CD8-positive, alpha-beta T cell (primary cell): ENCODE measurements at regions of chr15 and their contacts with region 1.

Region 1: GRCh38 chr15:51982013-51982769 is 10.6 kb upstream of the LEO1 start:
- DNase-seq: peak in 7 of 9 experiments; percentile 5 to 81 (median 32)
- ATAC-seq: peak; percentile 96
- H3K4me3 ChIP-seq: no peak overlapping the region
- H3K4me3 Mint-ChIP-seq: peak overlapping the region; percentile 68
- H3K27ac ChIP-seq: no peak overlapping the region
- H3K27ac Mint-ChIP-seq: peak overlapping the region; percentile 25
- H3K4me1 ChIP-seq: peaks cover 8% of the 10 kb centered on the region
- H3K4me1 Mint-ChIP-seq: peaks cover 10% of the 10 kb centered on the region
- H3K27me3 ChIP-seq: peaks cover 0 to 2% of the 10 kb centered on the region in 2 experiments
- H3K27me3 Mint-ChIP-seq: no peaks in the 10 kb centered on the region
- CTCF ChIP-seq: peak; percentile 88

Region 2: GRCh38 chr15:51516291-51516690 is 465.9 kb before region 1 on chr15:
- CTCF ChIA-PET with region 1: no interaction called
- POLR2A ChIA-PET with region 1: no interaction called
- intact Hi-C with region 1: no loop called
- DNase-seq: no peak
- ATAC-seq: no peak
- H3K4me3 ChIP-seq: no peak overlapping the region
- H3K4me3 Mint-ChIP-seq: no peak overlapping the region
- H3K27ac ChIP-seq: no peak overlapping the region
- H3K27ac Mint-ChIP-seq: no peak overlapping the region
- H3K4me1 ChIP-seq: no peaks in the 10 kb centered on the region
- H3K4me1 Mint-ChIP-seq: no peaks in the 10 kb centered on the region
- H3K27me3 ChIP-seq: no peaks in the 10 kb centered on the region
- H3K27me3 Mint-ChIP-seq: no peaks in the 10 kb centered on the region
- CTCF ChIP-seq: no peak

Region 3: DNA sequence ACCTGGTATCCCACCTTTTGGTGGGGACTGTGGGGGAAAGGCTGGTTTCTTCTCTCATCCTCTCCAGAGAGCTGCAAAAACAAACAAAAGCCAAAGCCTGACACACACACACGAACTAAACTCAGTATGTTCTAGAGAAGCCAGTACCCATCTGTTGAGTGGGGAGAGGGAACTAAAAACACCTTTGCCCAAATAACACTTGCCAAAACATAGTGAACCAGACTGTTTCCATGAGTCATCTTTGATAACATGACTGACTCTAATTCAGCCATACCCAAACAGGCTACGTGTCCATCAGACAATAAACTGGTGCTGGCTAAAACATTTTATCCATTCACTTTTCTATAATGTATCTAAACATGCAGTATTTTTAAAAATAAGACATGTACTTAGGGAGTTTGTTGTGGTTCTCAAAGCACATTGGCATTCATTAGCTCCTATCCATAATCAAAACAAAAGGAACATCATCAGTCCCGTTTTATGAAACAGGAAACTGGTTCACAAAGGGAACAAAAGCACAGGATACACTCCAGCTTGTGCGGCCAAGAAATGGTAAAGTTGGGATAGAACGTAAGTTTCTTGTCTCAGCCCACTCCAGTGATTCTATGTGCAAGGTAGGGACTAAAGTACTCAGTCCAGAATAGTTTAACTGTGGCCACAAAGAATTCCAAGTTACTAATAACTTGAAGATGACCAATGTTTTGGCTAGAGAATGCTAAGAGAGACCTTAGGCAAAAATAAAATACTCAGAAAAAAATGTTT is 260.8 kb before region 1 on chr15:
- CTCF ChIA-PET with region 1: no interaction called
- POLR2A ChIA-PET with region 1: no interaction called
- intact Hi-C with region 1: no loop called
- DNase-seq: no peak
- ATAC-seq: no peak
- H3K4me3 ChIP-seq: no peak overlapping the region
- H3K4me3 Mint-ChIP-seq: no peak overlapping the region
- H3K27ac ChIP-seq: no peak overlapping the region
- H3K27ac Mint-ChIP-seq: no peak overlapping the region
- H3K4me1 ChIP-seq: peaks cover 22% of the 10 kb centered on the region
- H3K4me1 Mint-ChIP-seq: peaks cover 33% of the 10 kb centered on the region
- H3K27me3 ChIP-seq: no peaks in the 10 kb centered on the region
- H3K27me3 Mint-ChIP-seq: no peaks in the 10 kb centered on the region
- CTCF ChIP-seq: no peak

Region 4: DNA sequence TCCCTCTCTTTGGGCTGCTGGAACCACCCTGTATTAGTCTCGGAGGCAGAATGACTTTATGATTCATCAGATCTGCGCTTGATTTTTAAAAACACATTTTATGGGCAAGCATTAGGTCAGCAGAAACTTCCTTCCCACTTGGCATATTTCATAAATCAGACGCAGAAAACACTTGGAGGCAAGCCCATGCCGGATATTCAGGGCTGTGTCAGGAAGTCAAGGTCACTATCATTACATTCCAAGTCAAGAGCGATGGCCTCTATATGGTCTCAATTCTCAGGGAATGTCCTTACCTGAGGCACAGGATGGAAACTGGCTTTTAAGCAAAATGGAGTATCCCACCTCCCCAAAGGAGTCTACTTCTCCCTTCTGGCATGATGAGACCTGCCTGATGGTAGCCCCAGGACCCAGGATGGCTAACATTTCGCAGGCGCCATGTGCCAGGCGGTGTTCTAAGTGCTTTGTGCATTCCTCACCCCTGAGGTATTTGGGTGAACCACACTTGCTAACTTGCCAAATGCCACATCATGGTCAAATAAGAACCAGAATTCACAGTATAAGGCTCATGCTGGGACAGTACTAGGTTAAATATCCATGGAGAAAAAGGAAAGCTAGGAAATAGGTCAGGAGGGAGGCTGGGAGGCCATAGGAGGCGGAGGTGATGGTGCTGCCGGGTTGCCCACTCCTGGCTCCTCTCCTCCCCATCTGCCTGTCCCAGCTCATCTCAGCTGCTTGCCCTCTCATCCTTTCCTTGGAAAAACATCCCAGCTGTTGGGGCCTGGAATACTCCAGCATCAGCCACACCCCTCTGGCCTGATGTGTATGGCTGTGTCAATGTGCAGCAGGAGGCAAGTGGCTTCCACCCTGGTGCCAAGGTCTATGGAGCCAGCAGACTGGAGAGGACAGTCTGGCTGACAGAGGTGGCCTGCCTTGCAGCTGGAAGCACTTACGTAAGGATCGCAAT is 111.6 kb after region 1 on chr15:
- CTCF ChIA-PET with region 1: no interaction called
- POLR2A ChIA-PET with region 1: no interaction called
- intact Hi-C with region 1: no loop called
- DNase-seq: no peak
- ATAC-seq: no peak
- H3K4me3 ChIP-seq: no peak overlapping the region
- H3K4me3 Mint-ChIP-seq: no peak overlapping the region
- H3K27ac ChIP-seq: no peak overlapping the region
- H3K27ac Mint-ChIP-seq: no peak overlapping the region
- H3K4me1 ChIP-seq: no peaks in the 10 kb centered on the region
- H3K4me1 Mint-ChIP-seq: no peaks in the 10 kb centered on the region
- H3K27me3 ChIP-seq: no peaks in the 10 kb centered on the region
- H3K27me3 Mint-ChIP-seq: no peaks in the 10 kb centered on the region
- CTCF ChIP-seq: no peak

Region 5: DNA sequence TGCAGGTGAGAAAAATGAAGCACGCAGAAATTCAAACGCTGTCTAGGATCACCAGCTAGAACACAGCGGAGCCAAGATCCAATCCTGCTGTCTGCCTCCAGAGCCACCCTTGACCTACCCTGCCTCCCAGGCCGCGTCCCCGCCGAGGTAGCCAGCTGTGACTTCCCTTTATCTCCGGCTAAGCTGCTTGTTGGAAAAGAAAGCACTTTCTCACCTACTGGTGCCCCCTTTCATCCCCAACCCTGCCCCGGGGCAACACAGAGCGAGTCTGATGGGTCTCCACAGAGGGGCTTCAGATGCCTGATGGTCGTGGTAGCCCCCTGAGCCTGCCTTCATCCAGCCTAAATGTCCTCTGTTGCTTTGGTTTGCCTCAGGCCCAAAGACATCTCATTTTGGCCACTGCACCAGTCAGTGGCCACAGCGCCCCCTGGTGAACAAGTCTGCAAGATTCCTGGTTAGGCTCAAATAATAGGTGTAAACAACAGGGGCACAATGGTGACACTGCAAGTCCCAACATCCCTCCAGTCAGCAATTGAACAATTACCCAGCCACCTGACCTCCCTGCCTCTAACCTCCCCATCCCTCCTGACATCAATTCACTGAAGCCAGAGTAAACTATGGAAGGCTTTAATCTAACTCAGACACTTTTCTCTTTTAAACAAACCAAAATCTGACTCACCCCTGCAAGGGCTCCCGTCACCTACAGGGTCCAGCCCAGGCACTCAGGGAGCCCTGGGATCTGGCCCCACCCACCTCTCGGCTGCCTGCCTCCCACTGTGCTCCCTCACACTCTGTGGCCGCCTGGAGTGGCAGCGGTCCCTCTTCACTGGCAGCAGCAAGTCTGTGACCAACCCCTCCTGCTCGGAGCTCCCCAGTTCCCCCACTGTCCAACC is 157.7 kb after region 1 on chr15:
- CTCF ChIA-PET with region 1: interaction called, 4 read pairs
- POLR2A ChIA-PET with region 1: no interaction called
- intact Hi-C with region 1: loop called (anchors 1 to 2 kb)
- DNase-seq: peak; percentile 25 to 72 (median 63)
- ATAC-seq: peak; percentile 58
- H3K4me3 ChIP-seq: no peak overlapping the region
- H3K4me3 Mint-ChIP-seq: no peak overlapping the region
- H3K27ac ChIP-seq: no peak overlapping the region
- H3K27ac Mint-ChIP-seq: no peak overlapping the region
- H3K4me1 ChIP-seq: peaks cover 22% of the 10 kb centered on the region
- H3K4me1 Mint-ChIP-seq: peaks cover 21% of the 10 kb centered on the region
- H3K27me3 ChIP-seq: no peaks in the 10 kb centered on the region
- H3K27me3 Mint-ChIP-seq: no peaks in the 10 kb centered on the region
- CTCF ChIP-seq: peak; percentile 80